ENCODE measurements at regions of chr3 and their contacts with region 1.

Region 1: GRCh38 chr3:161559177-161559998 is 62.8 kb downstream of the OTOL1 start:
- DNase-seq: peak; percentile 50
- H3K4me3 Mint-ChIP-seq: no peak overlapping the region
- H3K27ac Mint-ChIP-seq: no peak overlapping the region
- H3K4me1 Mint-ChIP-seq: peaks cover 9% of the 10 kb centered on the region
- H3K27me3 Mint-ChIP-seq: no peaks in the 10 kb centered on the region
- CTCF ChIP-seq: peak; percentile 95

Region 2: DNA sequence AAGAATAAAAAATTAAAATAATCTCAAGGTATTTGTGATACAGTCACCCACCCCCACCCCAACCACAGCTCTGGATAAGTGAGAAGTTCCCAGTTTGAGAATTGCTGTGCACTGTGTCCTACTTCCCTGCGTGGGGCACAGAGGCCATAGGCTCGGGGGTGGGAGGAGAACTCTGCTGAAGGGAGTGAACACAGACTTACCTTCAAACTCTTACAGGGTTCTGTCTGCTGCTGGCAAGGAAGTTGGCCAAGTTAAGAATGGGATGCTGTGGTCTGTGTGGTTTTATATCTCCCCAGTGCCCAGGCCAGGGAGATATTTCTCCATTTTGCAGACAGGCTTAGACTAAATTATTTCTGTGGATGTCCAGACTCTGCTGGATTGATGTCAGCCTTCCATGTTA is 225.7 kb before region 1 on chr3:
- CTCF ChIA-PET with region 1: no interaction called
- intact Hi-C with region 1: no loop called
- DNase-seq: no peak
- H3K4me3 Mint-ChIP-seq: no peak overlapping the region
- H3K27ac Mint-ChIP-seq: no peak overlapping the region
- H3K4me1 Mint-ChIP-seq: peaks cover 25% of the 10 kb centered on the region
- H3K27me3 Mint-ChIP-seq: no peaks in the 10 kb centered on the region
- CTCF ChIP-seq: no peak

Region 3: GRCh38 chr3:161508863-161509477 is 50.4 kb before region 1 on chr3:
- CTCF ChIA-PET with region 1: no interaction called
- intact Hi-C with region 1: loop called (anchors 2 kb)
- DNase-seq: peak; percentile 10
- H3K4me3 Mint-ChIP-seq: no peak overlapping the region
- H3K27ac Mint-ChIP-seq: no peak overlapping the region
- H3K4me1 Mint-ChIP-seq: no peaks in the 10 kb centered on the region
- H3K27me3 Mint-ChIP-seq: no peaks in the 10 kb centered on the region
- CTCF ChIP-seq: peak; percentile 61

Region 4: DNA sequence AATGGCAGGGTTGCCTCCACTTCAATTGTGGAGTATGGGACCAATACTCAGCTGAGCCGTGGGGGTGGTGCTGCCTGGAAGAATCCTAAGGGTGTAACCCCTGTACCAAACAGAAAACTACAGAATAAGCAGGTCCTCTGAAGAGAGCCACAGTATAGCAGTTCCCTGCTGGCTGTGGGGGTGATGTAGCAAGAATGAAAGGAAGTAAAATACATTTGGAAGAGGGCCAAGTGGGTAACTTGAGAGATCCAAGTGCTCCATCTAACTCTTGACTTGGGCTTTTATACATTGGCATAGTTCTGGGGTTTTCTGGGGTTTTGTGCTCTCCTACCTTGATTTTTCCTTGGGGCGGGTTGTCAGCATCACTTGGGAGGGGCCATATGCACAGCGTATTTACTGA is 278.6 kb after region 1 on chr3:
- CTCF ChIA-PET with region 1: no interaction called
- intact Hi-C with region 1: loop called (anchors 5 kb)
- DNase-seq: no peak
- H3K4me3 Mint-ChIP-seq: no peak overlapping the region
- H3K27ac Mint-ChIP-seq: no peak overlapping the region
- H3K4me1 Mint-ChIP-seq: no peaks in the 10 kb centered on the region
- H3K27me3 Mint-ChIP-seq: no peaks in the 10 kb centered on the region
- CTCF ChIP-seq: no peak

Region 5: DNA sequence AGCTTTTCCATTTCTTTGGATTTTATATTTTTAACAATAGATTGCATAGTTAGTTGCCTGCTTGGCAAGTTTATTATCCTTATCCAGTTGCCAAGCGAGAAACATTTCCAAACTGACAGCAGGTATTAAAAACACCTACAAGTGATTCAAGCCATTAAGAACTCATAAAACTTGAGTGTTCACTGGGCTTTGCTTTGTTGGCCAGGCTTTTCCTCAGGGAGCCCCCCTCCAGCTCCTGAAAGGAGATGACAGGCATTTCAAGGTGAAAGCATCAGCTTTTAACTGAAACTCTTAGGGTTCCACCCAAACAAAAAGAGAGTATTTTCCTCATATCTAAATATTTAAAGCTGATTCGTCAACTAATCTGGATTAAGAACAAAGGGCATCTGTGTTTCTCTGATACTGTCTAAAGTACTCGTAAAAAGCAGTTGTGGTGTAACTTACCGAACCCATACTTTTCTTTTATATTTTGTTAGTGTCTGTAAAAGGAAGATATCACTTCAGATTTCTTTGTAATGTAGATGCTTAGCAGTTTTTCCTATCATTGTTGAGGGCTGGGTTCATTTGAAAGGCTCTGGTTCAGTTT is 300.6 kb after region 1 on chr3:
- CTCF ChIA-PET with region 1: no interaction called
- intact Hi-C with region 1: no loop called
- DNase-seq: no peak
- H3K4me3 Mint-ChIP-seq: no peak overlapping the region
- H3K27ac Mint-ChIP-seq: no peak overlapping the region
- H3K4me1 Mint-ChIP-seq: peaks cover 2% of the 10 kb centered on the region
- H3K27me3 Mint-ChIP-seq: no peaks in the 10 kb centered on the region
- CTCF ChIP-seq: no peak

Region 6: GRCh38 chr3:162041622-162042021 is 482.2 kb after region 1 on chr3:
- CTCF ChIA-PET with region 1: no interaction called
- intact Hi-C with region 1: loop called (anchors 5 kb)
- DNase-seq: peak; percentile 13
- H3K4me3 Mint-ChIP-seq: no peak overlapping the region
- H3K27ac Mint-ChIP-seq: no peak overlapping the region
- H3K4me1 Mint-ChIP-seq: no peaks in the 10 kb centered on the region
- H3K27me3 Mint-ChIP-seq: no peaks in the 10 kb centered on the region
- CTCF ChIP-seq: no peak

Region 7: DNA sequence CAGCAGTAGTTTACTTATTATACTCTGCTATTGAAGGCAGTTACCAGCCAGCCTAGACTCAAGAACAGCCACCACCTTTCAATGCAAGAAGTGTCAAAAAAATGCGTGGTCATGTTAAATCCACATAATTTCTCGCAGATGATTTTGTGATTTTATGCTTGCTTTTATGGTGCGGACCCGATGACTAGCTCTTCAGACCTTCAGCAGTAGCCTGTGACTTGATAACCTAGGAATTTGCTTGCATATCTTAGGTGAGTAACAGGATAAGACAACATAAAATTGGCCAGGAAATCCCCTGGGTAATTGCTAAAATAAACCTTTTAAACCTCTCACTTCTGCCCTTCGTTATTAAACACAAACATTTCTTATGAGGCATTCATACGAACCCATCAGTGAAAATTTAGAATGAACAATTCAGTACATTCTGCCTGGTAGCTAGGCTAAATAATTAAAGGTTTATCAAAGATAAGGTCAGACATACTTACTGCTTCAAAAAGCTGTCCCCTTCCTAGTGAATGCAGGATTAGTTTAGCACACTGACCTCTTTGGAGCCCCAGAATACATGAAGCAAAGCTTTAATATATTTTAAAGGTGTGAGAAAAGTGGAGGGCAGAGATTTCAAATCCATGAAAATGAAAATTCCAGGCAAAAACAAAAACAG is 736.1 kb after region 1 on chr3:
- CTCF ChIA-PET with region 1: no interaction called
- intact Hi-C with region 1: loop called (anchors 10 kb)
- DNase-seq: peak; percentile 47
- H3K4me3 Mint-ChIP-seq: peak overlapping the region; percentile 11
- H3K27ac Mint-ChIP-seq: peak overlapping the region; percentile 40
- H3K4me1 Mint-ChIP-seq: peaks cover 41% of the 10 kb centered on the region
- H3K27me3 Mint-ChIP-seq: no peaks in the 10 kb centered on the region
- CTCF ChIP-seq: no peak

Region 8: DNA sequence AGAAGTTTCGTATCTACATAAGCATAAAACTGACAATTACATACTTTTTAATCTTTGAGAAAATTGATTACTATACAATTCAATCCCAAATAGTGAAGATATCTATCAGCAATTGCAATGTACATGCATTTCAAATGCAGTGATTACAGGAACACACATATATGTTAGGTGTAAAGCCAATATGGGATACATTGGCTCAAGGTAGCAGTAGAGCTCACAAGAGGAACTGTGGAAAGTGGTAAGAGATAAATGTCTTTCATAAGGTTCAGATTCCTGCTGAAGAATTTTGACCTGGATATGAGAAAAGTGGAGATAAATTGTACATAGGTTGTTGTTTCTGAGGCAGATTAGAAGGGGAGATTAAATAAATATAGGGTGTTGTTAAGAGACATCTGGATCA is 1217.7 kb after region 1 on chr3:
- CTCF ChIA-PET with region 1: no interaction called
- intact Hi-C with region 1: loop called (anchors 5 kb)
- DNase-seq: peak; percentile 17
- H3K4me3 Mint-ChIP-seq: no peak overlapping the region
- H3K27ac Mint-ChIP-seq: no peak overlapping the region
- H3K4me1 Mint-ChIP-seq: no peaks in the 10 kb centered on the region
- H3K27me3 Mint-ChIP-seq: no peaks in the 10 kb centered on the region
- CTCF ChIP-seq: peak; percentile 55

Region 9: DNA sequence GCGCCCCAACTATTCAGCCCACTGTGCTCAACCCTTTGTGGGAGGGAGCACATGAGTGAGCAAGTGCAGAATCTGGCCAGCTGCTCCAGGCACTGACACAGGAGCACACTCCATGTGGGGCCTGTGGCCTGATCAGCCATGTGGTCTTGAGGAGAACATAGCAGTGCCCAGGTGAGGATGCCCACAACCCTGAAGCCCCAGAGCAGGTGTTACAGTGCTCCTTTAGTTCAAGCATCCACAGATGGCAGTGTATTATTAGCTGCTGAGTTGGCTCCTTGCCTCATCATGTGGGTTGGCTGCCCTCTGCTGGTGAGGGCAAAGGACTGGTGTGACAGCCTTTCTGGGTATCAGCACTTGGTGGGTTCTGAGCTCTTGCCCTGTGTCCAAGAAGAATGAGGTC is 1930.7 kb after region 1 on chr3:
- CTCF ChIA-PET with region 1: no interaction called
- intact Hi-C with region 1: loop called (anchors 1 kb)
- DNase-seq: peak; percentile 87
- H3K4me3 Mint-ChIP-seq: no peak overlapping the region
- H3K27ac Mint-ChIP-seq: no peak overlapping the region
- H3K4me1 Mint-ChIP-seq: no peaks in the 10 kb centered on the region
- H3K27me3 Mint-ChIP-seq: no peaks in the 10 kb centered on the region
- CTCF ChIP-seq: peak; percentile 96